PC-9 (cell line): ENCODE measurements at regions of chr6 and their contacts with region 1.

Region 1: DNA sequence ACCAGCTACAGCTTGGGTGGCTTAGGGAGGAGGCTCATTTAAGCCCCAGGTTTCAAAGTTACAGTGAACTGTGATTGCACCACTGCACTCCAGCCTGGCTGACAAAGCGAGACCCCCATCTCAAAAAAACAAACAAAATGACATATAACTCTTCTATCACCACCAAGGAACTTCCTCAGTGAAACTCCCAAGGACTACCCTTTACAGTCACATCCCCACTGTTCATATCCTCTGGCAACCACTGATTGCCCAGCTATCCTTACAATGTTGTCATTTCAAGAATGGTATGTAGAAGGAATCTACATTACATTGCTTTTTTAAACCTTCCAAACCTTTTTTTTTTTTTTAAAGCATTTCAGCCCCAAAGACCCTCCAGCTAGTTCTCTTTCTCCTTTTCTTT is 123.1 kb upstream of the CARMIL1 start:
- DNase-seq: no peak
- H3K4me3 ChIP-seq: no peak overlapping the region
- H3K27ac ChIP-seq: no peak overlapping the region
- H3K4me1 ChIP-seq: no peaks in the 10 kb centered on the region
- H3K27me3 ChIP-seq: no peaks in the 10 kb centered on the region
- CTCF ChIP-seq: no peak

Region 2: DNA sequence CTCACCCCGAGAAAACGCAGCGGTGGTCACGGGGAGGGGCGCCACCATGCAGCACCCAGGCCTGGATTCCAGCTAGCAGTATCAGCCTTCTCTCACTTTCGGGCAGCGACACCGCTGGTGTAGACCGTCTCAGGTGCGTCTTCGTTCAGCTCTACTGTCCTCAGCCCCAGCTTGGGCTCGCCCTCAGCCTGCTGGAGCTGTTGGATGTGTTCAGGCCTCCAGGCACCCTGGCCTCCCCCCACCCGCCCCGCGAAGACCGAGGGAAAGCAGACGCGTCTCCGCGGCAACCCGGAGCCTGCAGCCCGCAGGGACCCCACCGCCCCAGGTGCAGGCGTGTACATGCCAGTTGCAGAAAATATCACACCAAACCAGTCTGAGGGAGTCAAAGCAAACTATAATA is 62.2 kb after region 1 on chr6:
- CTCF ChIA-PET with region 1: no interaction called
- POLR2A ChIA-PET with region 1: no interaction called
- intact Hi-C with region 1: loop called (anchors 10 kb)
- DNase-seq: no peak
- H3K4me3 ChIP-seq: no peak overlapping the region
- H3K27ac ChIP-seq: no peak overlapping the region
- H3K4me1 ChIP-seq: peaks cover 6% of the 10 kb centered on the region; the same call in 1 of the 2 replicates
- H3K27me3 ChIP-seq: no peaks in the 10 kb centered on the region
- CTCF ChIP-seq: no peak